Thyroid gland (tissue), 4 donors: ENCODE measurements at regions of chr4 and their contacts with region 1.

Region 1: GRCh38 chr4:82373816-82374625 is at the start of gene HNRNPD:
- DNase-seq: peak; percentile 99
- H3K4me3 ChIP-seq: peak within 1 kb of the TSS; percentile 72 to 97 (median 89)
- H3K27ac ChIP-seq: peak within 1 kb of the TSS; percentile 96 to 100 (median 98)
- H3K4me1 ChIP-seq: peaks cover 17 to 19% of the 10 kb centered on the region in 2 donors
- H3K27me3 ChIP-seq: no peaks in the 10 kb centered on the region
- CTCF ChIP-seq: no peak
- POLR2A ChIP-seq: peak; percentile 10 to 88
- total RNA-seq, gene HNRNPD: 67.1 to 145 (median 93.8) TPM

Region 2: DNA sequence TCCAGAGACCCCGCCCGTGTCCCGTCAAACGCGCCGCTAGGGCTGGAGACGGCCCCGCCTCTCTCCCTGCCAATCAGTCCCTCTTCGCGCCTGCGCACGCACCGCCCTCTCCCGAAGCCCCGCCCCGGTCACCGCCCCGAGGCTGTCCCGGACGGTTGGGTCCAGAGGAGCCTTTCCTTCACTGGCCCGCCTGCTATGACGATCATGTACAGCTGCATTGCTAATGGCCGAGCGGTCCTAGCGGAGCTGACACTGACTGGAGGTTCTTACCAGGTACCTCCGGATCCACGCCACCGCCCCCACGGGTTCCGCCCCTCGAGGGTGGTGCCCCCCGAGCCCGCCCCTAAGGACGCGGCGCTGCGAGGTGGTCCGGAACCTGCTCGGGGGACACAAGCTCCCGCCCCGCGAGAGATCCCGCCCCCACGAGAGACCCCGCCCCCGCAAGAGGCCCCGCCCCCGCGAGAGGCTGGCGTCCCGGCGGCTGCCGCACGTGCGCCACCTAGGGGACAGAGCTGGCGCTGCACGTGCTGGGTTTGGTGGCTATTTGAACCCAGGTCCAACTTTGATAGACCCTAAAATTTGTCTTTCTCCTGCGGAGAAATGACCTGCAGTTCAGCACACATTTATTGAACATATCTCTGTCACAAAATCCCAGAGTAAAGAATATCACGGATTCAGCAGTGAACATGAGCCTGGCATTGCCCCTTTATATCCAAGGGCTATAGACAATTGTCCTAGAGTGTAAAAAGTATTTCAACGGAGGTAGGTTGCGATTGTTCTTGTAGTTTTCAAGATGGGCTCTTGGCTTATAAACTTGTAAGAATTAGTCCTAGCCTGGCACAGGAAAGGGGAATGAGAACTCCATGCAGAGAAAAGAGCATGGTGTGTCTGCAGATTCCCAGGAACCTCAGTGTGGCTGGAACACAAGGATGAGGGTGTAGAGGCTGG is 88.9 kb before region 1 on chr4:
- intact Hi-C with region 1: loop called (anchors 10 kb)
- DNase-seq: peak; percentile 100
- H3K4me3 ChIP-seq: peak overlapping the region in 1 of 3 donors; percentile 21
- H3K27ac ChIP-seq: peak overlapping the region in 2 of 3 donors; percentile 48 to 56
- H3K4me1 ChIP-seq: no peaks in the 10 kb centered on the region
- H3K27me3 ChIP-seq: no peaks in the 10 kb centered on the region
- CTCF ChIP-seq: peak; percentile 68 to 100 (median 89)
- POLR2A ChIP-seq: peak in 1 of 2 donors; percentile 41

Region 3: GRCh38 chr4:82428969-82429727 is 55.1 kb after region 1 on chr4:
- intact Hi-C with region 1: loop called (anchors 2 kb)
- DNase-seq: peak; percentile 90 to 93
- H3K4me3 ChIP-seq: peak overlapping the region; percentile 43 to 98 (median 98)
- H3K27ac ChIP-seq: peak overlapping the region; percentile 93 to 98 (median 97)
- H3K4me1 ChIP-seq: peaks cover 27 to 28% of the 10 kb centered on the region in 2 donors
- H3K27me3 ChIP-seq: no peaks in the 10 kb centered on the region
- CTCF ChIP-seq: peak; percentile 46 to 97 (median 96)
- POLR2A ChIP-seq: peak; percentile 1 to 90

Region 4: GRCh38 chr4:82975792-82976191 is 601.8 kb after region 1 on chr4:
- intact Hi-C with region 1: no loop called
- DNase-seq: no peak
- H3K4me3 ChIP-seq: no peak overlapping the region
- H3K27ac ChIP-seq: no peak overlapping the region
- H3K4me1 ChIP-seq: no peaks in the 10 kb centered on the region
- H3K27me3 ChIP-seq: no peaks in the 10 kb centered on the region
- CTCF ChIP-seq: no peak
- POLR2A ChIP-seq: no peak